ENCODE measurements at regions of chr6 and their contacts with region 1.

Region 1: GRCh38 chr6:131914967-131915751 is 36.0 kb downstream of the CCN2 start:
- DNase-seq: peak; percentile 20
- H3K4me3 Mint-ChIP-seq: no peak overlapping the region
- H3K27ac Mint-ChIP-seq: no peak overlapping the region
- H3K4me1 Mint-ChIP-seq: peaks cover 8% of the 10 kb centered on the region
- H3K27me3 Mint-ChIP-seq: peaks cover 30% of the 10 kb centered on the region

Region 2: DNA sequence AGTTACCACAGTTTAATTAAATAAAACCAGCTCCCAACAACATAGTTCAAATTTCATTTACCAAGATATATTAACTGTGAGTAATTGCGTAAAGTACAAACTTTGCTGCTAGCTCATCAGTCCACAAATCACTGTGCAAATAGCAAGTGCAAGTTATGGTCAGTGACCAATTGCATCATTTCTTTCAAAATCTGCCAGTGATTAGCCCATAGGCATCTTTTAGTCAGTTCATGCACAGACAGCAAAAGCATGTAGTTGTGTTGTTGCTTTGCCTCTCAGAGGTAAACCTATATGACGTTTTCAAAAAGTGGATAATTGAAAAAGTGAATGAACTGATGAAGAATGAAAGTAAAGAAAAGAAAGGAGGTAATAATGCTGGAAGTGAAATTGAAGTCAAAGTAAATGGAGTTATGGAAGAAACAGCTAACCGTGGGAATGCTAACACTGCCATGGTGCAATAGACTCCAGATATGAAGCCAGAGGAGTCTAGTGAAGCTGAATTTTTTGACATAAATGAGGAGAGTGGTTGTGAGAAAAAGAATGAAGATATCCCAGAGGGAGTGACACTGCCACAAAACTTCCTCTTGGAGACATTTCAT is 70.8 kb before region 1 on chr6:
- intact Hi-C with region 1: no loop called
- DNase-seq: no peak
- H3K4me3 Mint-ChIP-seq: no peak overlapping the region
- H3K27ac Mint-ChIP-seq: no peak overlapping the region
- H3K4me1 Mint-ChIP-seq: no peaks in the 10 kb centered on the region
- H3K27me3 Mint-ChIP-seq: peaks cover 5% of the 10 kb centered on the region

Region 3: DNA sequence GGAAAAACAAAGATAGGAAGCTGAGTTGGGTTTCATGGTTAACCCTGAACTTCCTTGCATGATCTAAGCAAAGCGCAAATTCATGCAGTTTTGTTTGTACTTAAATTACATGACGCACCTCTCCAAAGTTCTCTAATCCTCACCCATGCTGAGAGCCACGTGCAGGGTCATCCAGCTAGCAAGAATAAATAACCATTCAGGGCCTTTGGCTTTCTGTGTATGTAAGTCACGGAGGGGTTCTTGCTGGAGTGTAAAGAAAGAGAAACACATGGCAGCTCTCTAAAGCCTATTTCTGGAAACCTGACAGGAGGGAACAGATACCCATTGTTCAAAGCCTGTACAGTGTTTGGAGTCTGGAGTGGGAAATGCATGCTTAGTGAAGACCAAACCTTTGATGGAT is 207.7 kb after region 1 on chr6:
- intact Hi-C with region 1: no loop called
- DNase-seq: no peak
- H3K4me3 Mint-ChIP-seq: no peak overlapping the region
- H3K27ac Mint-ChIP-seq: no peak overlapping the region
- H3K4me1 Mint-ChIP-seq: no peaks in the 10 kb centered on the region
- H3K27me3 Mint-ChIP-seq: no peaks in the 10 kb centered on the region

Region 4: GRCh38 chr6:132202574-132202973 is 287.4 kb after region 1 on chr6:
- intact Hi-C with region 1: no loop called
- DNase-seq: no peak
- H3K4me3 Mint-ChIP-seq: no peak overlapping the region
- H3K27ac Mint-ChIP-seq: no peak overlapping the region
- H3K4me1 Mint-ChIP-seq: no peaks in the 10 kb centered on the region
- H3K27me3 Mint-ChIP-seq: no peaks in the 10 kb centered on the region

Region 5: GRCh38 chr6:132218059-132218696 is 303.0 kb after region 1 on chr6:
- intact Hi-C with region 1: loop called (anchors 1 kb)
- DNase-seq: no peak
- H3K4me3 Mint-ChIP-seq: no peak overlapping the region
- H3K27ac Mint-ChIP-seq: no peak overlapping the region
- H3K4me1 Mint-ChIP-seq: no peaks in the 10 kb centered on the region
- H3K27me3 Mint-ChIP-seq: peaks cover 6% of the 10 kb centered on the region

Region 6: DNA sequence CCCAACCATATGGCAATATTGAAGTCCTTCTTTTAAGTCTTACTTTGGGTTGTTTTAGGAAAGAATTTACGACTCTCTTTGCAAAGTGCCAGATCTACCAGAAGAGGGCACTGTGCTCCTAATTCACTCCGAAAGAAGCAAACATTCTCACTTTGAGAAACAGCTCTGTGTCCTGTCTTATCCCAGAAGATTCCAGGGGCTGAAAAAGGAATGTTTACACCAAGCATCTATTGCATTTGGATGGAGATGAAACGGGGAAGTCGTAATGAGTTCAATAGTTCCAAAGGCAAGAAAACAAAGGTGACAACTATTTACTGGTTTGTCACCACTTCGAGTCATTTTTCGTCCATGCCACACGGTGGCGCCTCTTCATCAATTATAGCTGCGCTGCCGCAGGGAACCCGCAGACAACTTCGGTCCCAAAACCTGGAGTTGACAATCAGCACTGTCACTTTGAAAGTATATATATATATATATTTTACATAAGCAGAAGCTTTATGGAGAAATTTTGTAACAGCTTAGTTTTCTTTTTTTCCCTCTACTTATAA is 364.5 kb after region 1 on chr6:
- intact Hi-C with region 1: loop called (anchors 1 kb)
- DNase-seq: peak; percentile 58
- H3K4me3 Mint-ChIP-seq: peak overlapping the region; percentile 75
- H3K27ac Mint-ChIP-seq: no peak overlapping the region
- H3K4me1 Mint-ChIP-seq: no peaks in the 10 kb centered on the region
- H3K27me3 Mint-ChIP-seq: peaks cover 15% of the 10 kb centered on the region

Region 7: DNA sequence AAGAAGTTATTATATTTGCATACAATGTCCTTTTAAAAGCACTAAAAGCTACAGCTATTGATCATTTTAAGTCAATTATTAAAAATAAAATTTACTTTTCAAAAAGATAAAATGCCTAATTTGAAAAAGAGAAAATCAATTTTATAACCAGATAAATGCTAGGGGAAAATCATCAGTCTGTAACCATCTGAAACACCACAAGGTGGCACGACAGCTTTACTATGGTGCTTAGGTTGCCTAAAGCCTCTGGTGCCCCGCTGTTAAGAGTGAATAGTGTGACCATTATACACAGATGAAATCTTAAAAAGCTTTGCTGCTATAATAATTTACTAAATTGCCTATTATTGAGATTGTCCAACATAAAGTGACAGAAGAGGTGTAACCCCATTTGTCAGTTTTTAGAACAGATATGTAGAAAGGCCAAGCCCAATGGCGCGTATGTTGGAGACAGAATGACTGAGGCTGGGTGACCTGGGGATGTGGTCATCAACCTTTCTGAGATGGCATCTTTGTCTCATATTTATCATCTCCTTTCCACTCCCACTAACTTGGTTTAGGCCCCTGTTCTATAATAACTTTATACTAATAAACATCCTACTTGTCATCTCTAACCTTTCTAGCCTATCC is 385.3 kb after region 1 on chr6:
- intact Hi-C with region 1: loop called (anchors 2 kb)
- DNase-seq: no peak
- H3K4me3 Mint-ChIP-seq: no peak overlapping the region
- H3K27ac Mint-ChIP-seq: no peak overlapping the region
- H3K4me1 Mint-ChIP-seq: no peaks in the 10 kb centered on the region
- H3K27me3 Mint-ChIP-seq: peaks cover 17% of the 10 kb centered on the region